ENCODE measurements at regions of chr7 and their contacts with region 1.

Region 1: DNA sequence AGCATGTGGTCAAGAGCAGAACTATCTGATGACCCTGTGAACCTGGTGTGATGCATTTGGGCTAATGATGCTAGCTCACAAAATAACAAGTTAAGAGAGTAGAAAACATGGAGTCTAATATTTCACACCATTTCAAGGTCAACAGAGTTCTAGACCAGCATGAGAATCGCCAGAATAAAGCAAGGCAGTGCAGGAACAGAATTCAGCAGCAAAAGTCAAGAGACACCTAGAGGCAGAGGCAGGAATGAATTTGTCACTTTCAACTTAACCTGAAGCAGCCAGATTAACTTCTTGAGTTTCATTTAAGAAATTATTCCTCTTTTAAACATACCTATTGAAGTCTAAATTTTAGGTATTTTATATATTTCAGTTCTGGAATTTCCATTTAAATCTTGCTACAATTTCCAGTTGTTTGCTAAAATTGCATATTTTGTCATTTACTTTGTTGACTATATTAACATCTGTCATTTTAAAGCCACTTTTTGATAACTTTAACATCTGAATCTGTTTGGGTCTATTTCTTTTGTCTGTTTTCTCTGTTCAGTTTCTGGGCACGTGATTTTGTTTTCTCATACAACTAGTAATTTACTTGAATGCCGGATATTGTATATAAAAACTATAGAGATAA is 44.2 kb upstream of the PRSS58 start:
- DNase-seq: no peak
- H3K4me3 ChIP-seq: no peak overlapping the region
- H3K4me3 Mint-ChIP-seq: no peak overlapping the region
- H3K27ac ChIP-seq: no peak overlapping the region
- H3K27ac Mint-ChIP-seq: no peak overlapping the region
- H3K4me1 ChIP-seq: peaks cover 8% of the 10 kb centered on the region
- H3K4me1 Mint-ChIP-seq: peaks cover 14 to 28% (median 18%) of the 10 kb centered on the region in 4 donors
- H3K27me3 ChIP-seq: no peaks in the 10 kb centered on the region
- H3K27me3 Mint-ChIP-seq: peaks cover 15 to 18% of the 10 kb centered on the region in 2 donors

Region 2: GRCh38 chr7:142227477-142227876 is 74.6 kb before region 1 on chr7:
- CTCF ChIA-PET with region 1: no interaction called
- POLR2A ChIA-PET with region 1: no interaction called
- intact Hi-C with region 1: no loop called
- DNase-seq: no peak
- H3K4me3 ChIP-seq: no peak overlapping the region
- H3K4me3 Mint-ChIP-seq: no peak overlapping the region
- H3K27ac ChIP-seq: no peak overlapping the region
- H3K27ac Mint-ChIP-seq: no peak overlapping the region
- H3K4me1 ChIP-seq: no peaks in the 10 kb centered on the region
- H3K4me1 Mint-ChIP-seq: no peaks in the 10 kb centered on the region
- H3K27me3 ChIP-seq: no peaks in the 10 kb centered on the region
- H3K27me3 Mint-ChIP-seq: peaks cover 7 to 21% of the 10 kb centered on the region in 2 donors

Region 3: DNA sequence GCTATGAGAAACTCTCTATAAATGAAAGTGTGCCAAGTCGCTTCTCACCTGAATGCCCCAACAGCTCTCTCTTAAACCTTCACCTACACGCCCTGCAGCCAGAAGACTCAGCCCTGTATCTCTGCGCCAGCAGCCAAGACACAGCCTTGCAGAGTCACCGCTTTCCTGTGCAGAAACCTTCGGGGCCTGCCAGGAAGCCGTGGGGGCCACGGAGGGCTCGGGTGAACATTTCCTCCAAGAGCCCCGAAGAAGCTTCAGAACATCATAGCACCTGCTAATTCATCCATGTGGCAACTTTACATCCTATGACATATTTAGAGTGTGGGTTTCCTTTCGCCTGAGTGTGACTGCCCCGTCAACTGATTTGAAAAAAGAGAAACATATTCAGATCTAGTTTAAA is 11.5 kb after region 1 on chr7:
- CTCF ChIA-PET with region 1: interaction called, 104 read pairs
- POLR2A ChIA-PET with region 1: interaction called, 18 read pairs
- intact Hi-C with region 1: no loop called
- DNase-seq: peak in 4 of 5 donors; percentile 30 to 61 (median 38)
- H3K4me3 ChIP-seq: no peak overlapping the region
- H3K4me3 Mint-ChIP-seq: peak overlapping the region; percentile 17 to 67 (median 58)
- H3K27ac ChIP-seq: no peak overlapping the region
- H3K27ac Mint-ChIP-seq: peak overlapping the region in 6 of 7 donors; percentile 46 to 88 (median 67)
- H3K4me1 ChIP-seq: peaks cover 12% of the 10 kb centered on the region
- H3K4me1 Mint-ChIP-seq: peaks cover 6 to 27% (median 9%) of the 10 kb centered on the region in 4 donors
- H3K27me3 ChIP-seq: no peaks in the 10 kb centered on the region
- H3K27me3 Mint-ChIP-seq: peaks cover 9 to 14% of the 10 kb centered on the region in 2 donors

Region 4: GRCh38 chr7:142323706-142324105 is 21.7 kb after region 1 on chr7:
- CTCF ChIA-PET with region 1: interaction called, 104 read pairs
- POLR2A ChIA-PET with region 1: interaction called, 11 read pairs
- intact Hi-C with region 1: no loop called
- DNase-seq: peak in 2 of 5 donors; percentile 31 to 37
- H3K4me3 ChIP-seq: no peak overlapping the region
- H3K4me3 Mint-ChIP-seq: peak overlapping the region in 4 of 8 donors; percentile 6 to 69 (median 18)
- H3K27ac ChIP-seq: no peak overlapping the region
- H3K27ac Mint-ChIP-seq: peak overlapping the region; percentile 56 to 91 (median 71)
- H3K4me1 ChIP-seq: peaks cover 25% of the 10 kb centered on the region
- H3K4me1 Mint-ChIP-seq: peaks cover 13 to 34% (median 19%) of the 10 kb centered on the region in 4 donors
- H3K27me3 ChIP-seq: no peaks in the 10 kb centered on the region
- H3K27me3 Mint-ChIP-seq: peaks cover 0 to 3% of the 10 kb centered on the region in 2 donors

Region 5: GRCh38 chr7:142352543-142352942 is 50.5 kb after region 1 on chr7:
- CTCF ChIA-PET with region 1: interaction called, 11 read pairs
- POLR2A ChIA-PET with region 1: no interaction called
- intact Hi-C with region 1: no loop called
- DNase-seq: peak in 1 of 5 donors; percentile 19
- H3K4me3 ChIP-seq: peak overlapping the region in 1 of 2 donors; percentile 26
- H3K4me3 Mint-ChIP-seq: peak overlapping the region in 7 of 8 donors; percentile 63 to 83 (median 77)
- H3K27ac ChIP-seq: peak overlapping the region; percentile 38
- H3K27ac Mint-ChIP-seq: peak overlapping the region; percentile 72 to 90 (median 88)
- H3K4me1 ChIP-seq: peaks cover 34% of the 10 kb centered on the region
- H3K4me1 Mint-ChIP-seq: peaks cover 21 to 48% (median 37%) of the 10 kb centered on the region in 4 donors
- H3K27me3 ChIP-seq: no peaks in the 10 kb centered on the region
- H3K27me3 Mint-ChIP-seq: peaks cover 0 to 1% of the 10 kb centered on the region in 2 donors

Measured in CD4-positive, alpha-beta memory T cell (primary cell).